ENCODE measurements at regions of chr15 and their contacts with region 1.

Region 1: GRCh38 chr15:74373731-74374647 is 6.5 kb upstream of the CYP11A1 start:
- DNase-seq: peak; percentile 97
- CTCF ChIP-seq: peak; percentile 97

Region 2: GRCh38 chr15:74443100-74443909 is 69.3 kb after region 1 on chr15:
- in situ Hi-C with region 1: loop called (anchors 5 kb)
- DNase-seq: no peak
- CTCF ChIP-seq: no peak

Region 3: GRCh38 chr15:74489518-74490338 is 115.7 kb after region 1 on chr15:
- in situ Hi-C with region 1: loop called (anchors 5 kb)
- DNase-seq: peak; percentile 81
- CTCF ChIP-seq: peak; percentile 85

Region 4: DNA sequence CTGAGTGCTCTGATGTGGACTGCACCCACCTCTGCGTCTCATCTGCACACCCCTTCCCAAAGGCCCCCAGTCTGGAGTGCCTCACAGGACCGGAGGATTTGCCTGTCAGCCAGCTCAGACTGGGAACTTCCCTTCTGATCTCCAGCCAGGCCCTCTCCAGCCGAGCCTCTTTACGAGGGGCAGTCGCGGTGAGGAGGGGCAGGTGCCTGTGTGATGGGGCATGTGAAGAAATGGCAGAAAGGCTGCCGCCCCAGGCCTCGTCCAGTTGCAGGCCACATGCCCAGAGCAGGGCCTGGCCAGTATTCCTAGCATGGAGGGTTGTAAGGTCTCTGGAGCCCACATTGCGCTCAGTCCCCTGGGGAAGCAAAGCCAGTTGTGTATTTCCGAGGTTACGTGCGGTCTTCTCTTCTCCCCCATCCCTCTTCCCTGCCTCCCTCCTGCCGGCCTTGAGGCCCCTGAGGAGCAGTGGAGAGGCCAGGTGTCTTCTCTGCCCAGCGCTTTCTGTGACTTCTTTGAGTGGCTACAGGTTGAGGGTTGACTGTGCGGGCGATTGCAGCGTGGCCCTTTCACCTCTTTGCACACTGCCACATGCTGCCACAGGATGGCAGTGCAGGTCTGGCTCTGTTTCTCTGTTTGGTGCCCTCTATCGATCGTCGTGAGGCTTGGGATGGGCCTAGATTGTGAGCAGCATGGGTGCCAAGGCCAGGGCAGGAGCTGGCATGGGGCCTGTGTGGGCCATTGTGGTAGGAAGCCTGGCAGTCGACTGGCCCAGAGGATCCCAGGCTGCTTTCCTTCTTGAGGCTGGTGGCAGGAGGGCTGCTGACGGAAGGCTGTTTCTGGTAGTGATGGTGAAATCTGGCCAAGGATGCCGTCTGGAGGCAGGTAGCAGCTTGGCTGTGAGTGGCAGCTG is 246.9 kb after region 1 on chr15:
- in situ Hi-C with region 1: loop called (anchors 10 kb)
- DNase-seq: peak; percentile 85
- CTCF ChIP-seq: peak; percentile 96

Region 5: DNA sequence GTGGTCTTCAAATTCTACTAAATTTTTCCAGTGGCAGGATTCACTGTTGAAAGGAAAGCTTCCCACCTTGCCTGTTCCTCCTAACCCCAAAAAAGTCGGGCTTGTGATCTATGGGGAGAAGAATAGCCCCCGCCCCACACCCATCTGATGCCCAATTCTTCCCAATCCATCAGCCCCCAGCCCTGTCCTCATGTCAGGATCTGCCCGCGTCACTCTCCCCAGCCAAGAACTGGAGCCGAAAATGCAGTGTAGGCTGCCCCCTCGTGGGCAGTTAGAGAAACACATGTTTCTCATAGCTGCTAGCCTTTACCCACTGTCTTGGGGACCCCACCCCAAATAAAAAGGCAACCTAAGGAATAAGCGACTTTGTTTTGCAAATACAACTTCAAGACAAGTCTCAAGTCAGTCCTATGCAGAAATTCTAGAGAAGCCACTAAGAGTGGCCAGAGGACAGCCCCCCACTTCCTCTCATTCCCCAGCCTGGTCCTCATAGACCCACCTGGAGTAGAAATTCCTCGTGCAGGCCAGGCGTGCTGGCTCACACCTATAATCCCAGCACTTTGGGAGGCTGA is 394.9 kb after region 1 on chr15:
- in situ Hi-C with region 1: loop called (anchors 10 kb)
- DNase-seq: peak; percentile 85
- CTCF ChIP-seq: peak; percentile 82